ENCODE measurements at regions of chr11 and their contacts with region 1.

Region 1: GRCh38 chr11:86608251-86608799 is 64.1 kb downstream of the ME3 start:
- DNase-seq: peak; percentile 75
- H3K4me3 ChIP-seq: no peak overlapping the region
- H3K27ac ChIP-seq: peak overlapping the region; percentile 2 to 56 (median 34)
- H3K4me1 ChIP-seq: peaks cover 7 to 20% (median 10%) of the 10 kb centered on the region in 4 donors
- H3K27me3 ChIP-seq: no peaks in the 10 kb centered on the region
- CTCF ChIP-seq: peak; percentile 85 to 90 (median 87)
- EP300 ChIP-seq: no peak
- POLR2A ChIP-seq: no peak

Region 2: GRCh38 chr11:86818466-86819192 is 210.3 kb after region 1 on chr11:
- in situ Hi-C with region 1: loop called in 3 of 4 experiments (anchors 5 to 25 kb)
- intact Hi-C with region 1: loop called (anchors 5 kb)
- DNase-seq: no peak
- H3K4me3 ChIP-seq: no peak overlapping the region
- H3K27ac ChIP-seq: peak overlapping the region in 3 of 4 donors; percentile 70 to 84 (median 82)
- H3K4me1 ChIP-seq: peaks cover 0 to 25% (median 19%) of the 10 kb centered on the region in 4 donors
- H3K27me3 ChIP-seq: no peaks in the 10 kb centered on the region
- CTCF ChIP-seq: peak; percentile 75 to 83 (median 78)
- EP300 ChIP-seq: no peak
- POLR2A ChIP-seq: no peak